ENCODE measurements at regions of chr13 and their contacts with region 1.

Region 1: DNA sequence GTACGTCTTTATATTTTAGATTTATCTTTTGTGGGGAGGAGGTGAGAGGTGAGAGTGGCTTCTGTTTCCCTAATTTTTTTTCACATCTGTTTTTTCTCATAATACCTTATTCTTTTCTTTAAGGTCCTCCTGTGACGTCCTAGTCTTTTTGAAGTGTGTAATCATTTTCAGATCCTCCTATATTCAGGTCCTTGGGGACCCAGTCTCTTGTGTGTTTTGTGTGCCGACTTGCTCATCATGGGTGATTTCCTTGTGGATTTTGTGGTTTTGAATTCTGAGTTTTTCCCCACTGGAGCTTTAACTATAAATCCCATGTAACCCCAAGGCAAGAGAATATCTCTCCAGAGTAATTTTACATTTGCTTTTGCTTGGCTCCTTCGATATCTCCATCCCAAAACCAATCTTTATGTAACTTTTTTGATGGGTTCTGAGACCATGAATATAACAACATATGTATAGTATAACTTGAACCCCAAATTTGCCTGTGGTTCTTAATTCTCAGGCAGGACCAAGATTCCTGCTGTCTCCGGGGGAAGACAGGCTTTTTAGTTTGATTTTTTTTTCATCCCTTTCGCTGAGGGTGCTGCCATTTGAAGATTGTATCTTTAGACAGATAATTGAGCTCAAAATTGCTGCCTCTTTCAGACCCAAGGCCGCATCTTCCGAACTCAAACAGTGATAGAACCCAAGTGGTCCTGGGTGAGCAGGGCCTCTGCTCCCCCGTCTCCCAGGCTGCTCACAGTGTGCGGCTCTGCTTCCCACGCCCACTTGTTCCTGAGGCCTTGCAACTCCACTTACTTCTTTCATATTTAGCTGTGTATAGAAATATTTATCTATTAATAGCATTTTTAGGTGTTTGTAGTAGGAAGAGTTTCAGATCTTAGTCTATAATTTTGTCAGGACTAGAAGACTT is 59.1 kb upstream of the GPR183 start:
- DNase-seq: peak in 4 of 9 experiments; percentile 10 to 53 (median 28)
- ATAC-seq: no peak
- H3K4me3 ChIP-seq: no peak overlapping the region
- H3K4me3 Mint-ChIP-seq: peak overlapping the region; percentile 53
- H3K27ac ChIP-seq: peak overlapping the region; percentile 24 to 61
- H3K27ac Mint-ChIP-seq: peak overlapping the region; percentile 97
- H3K4me1 ChIP-seq: peaks cover 78% of the 10 kb centered on the region
- H3K4me1 Mint-ChIP-seq: peaks cover 88% of the 10 kb centered on the region
- H3K27me3 ChIP-seq: no peaks in the 10 kb centered on the region
- H3K27me3 Mint-ChIP-seq: no peaks in the 10 kb centered on the region
- CTCF ChIP-seq: no peak

Region 2: GRCh38 chr13:98436233-98436910 is 930.0 kb before region 1 on chr13:
- CTCF ChIA-PET with region 1: no interaction called
- POLR2A ChIA-PET with region 1: no interaction called
- intact Hi-C with region 1: no loop called
- DNase-seq: no peak
- ATAC-seq: no peak
- H3K4me3 ChIP-seq: no peak overlapping the region
- H3K4me3 Mint-ChIP-seq: no peak overlapping the region
- H3K27ac ChIP-seq: no peak overlapping the region
- H3K27ac Mint-ChIP-seq: no peak overlapping the region
- H3K4me1 ChIP-seq: no peaks in the 10 kb centered on the region
- H3K4me1 Mint-ChIP-seq: no peaks in the 10 kb centered on the region
- H3K27me3 ChIP-seq: no peaks in the 10 kb centered on the region
- H3K27me3 Mint-ChIP-seq: peaks cover 10% of the 10 kb centered on the region
- CTCF ChIP-seq: no peak

Region 3: GRCh38 chr13:99329477-99329876 is 36.9 kb before region 1 on chr13:
- CTCF ChIA-PET with region 1: no interaction called
- POLR2A ChIA-PET with region 1: no interaction called
- intact Hi-C with region 1: no loop called
- DNase-seq: no peak
- ATAC-seq: no peak
- H3K4me3 ChIP-seq: no peak overlapping the region
- H3K4me3 Mint-ChIP-seq: no peak overlapping the region
- H3K27ac ChIP-seq: no peak overlapping the region
- H3K27ac Mint-ChIP-seq: no peak overlapping the region
- H3K4me1 ChIP-seq: peaks cover 18% of the 10 kb centered on the region
- H3K4me1 Mint-ChIP-seq: peaks cover 49% of the 10 kb centered on the region
- H3K27me3 ChIP-seq: no peaks in the 10 kb centered on the region
- H3K27me3 Mint-ChIP-seq: no peaks in the 10 kb centered on the region
- CTCF ChIP-seq: no peak

Region 4: DNA sequence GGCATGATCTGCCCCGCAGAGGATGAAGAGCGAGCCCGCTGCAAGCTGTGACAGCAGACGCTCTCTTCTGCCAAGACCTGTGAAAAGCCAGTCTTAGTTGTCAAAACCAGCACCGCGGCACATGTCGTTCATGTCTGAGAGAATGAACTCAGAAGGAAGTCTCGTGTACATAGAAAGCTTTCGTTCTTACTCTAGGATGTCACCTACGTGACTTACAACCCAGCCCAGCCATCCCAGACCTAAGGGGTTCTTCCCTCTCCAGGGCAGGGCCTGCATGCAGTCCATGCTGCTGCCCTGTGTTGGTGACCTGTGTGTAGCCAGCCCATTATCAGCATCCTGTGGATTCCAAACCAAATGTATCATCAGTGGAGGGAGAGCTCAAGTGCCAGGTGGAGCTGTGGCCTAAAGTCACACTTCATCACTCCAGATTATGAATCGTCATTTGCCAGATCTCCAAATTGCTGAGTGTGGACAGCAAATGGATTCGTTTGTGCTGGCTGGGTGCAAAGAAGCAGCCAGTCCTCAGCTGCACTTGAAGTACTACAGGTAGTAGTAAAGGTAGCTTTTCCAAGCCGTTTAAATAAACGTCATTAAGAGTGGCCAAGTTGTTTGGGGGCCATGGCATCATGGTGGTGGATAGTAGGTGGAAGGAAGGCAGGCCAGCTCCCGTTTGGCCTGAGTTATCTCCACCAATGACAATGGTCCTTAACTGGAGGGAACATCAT is 14.8 kb after region 1 on chr13:
- CTCF ChIA-PET with region 1: interaction called, 8 read pairs
- POLR2A ChIA-PET with region 1: interaction called, 51 read pairs
- intact Hi-C with region 1: loop called in 1 of 2 experiments (anchors 1 kb)
- DNase-seq: peak in 7 of 9 experiments; percentile 41 to 84 (median 75)
- ATAC-seq: peak; percentile 50
- H3K4me3 ChIP-seq: no peak overlapping the region
- H3K4me3 Mint-ChIP-seq: peak overlapping the region; percentile 53
- H3K27ac ChIP-seq: peak overlapping the region; percentile 42 to 72
- H3K27ac Mint-ChIP-seq: peak overlapping the region; percentile 98
- H3K4me1 ChIP-seq: peaks cover 79% of the 10 kb centered on the region
- H3K4me1 Mint-ChIP-seq: peaks cover 93% of the 10 kb centered on the region
- H3K27me3 ChIP-seq: no peaks in the 10 kb centered on the region
- H3K27me3 Mint-ChIP-seq: no peaks in the 10 kb centered on the region
- CTCF ChIP-seq: no peak